CD8-positive, alpha-beta T cell (primary cell): ENCODE measurements at regions of chr1 and their contacts with region 1.

Region 1: GRCh38 chr1:167553136-167554027 is at the start of gene CREG1:
- DNase-seq: peak; percentile 70 to 93 (median 88)
- ATAC-seq: peak; percentile 97
- H3K4me3 ChIP-seq: peak within 1 kb of the TSS; percentile 62 to 70
- H3K4me3 Mint-ChIP-seq: peak within 1 kb of the TSS; percentile 88
- H3K27ac ChIP-seq: peak within 1 kb of the TSS in 1 of 2 experiments; percentile 57
- H3K27ac Mint-ChIP-seq: no peak within 1 kb of the TSS
- H3K4me1 ChIP-seq: peaks cover 18% of the 10 kb centered on the region
- H3K4me1 Mint-ChIP-seq: peaks cover 47% of the 10 kb centered on the region
- H3K27me3 ChIP-seq: no peaks in the 10 kb centered on the region
- H3K27me3 Mint-ChIP-seq: no peaks in the 10 kb centered on the region
- CTCF ChIP-seq: no peak
- total RNA-seq, gene CREG1: 9.3 to 9.8 TPM

Region 2: GRCh38 chr1:167185974-167186657 is 367.3 kb before region 1 on chr1:
- CTCF ChIA-PET with region 1: no interaction called
- POLR2A ChIA-PET with region 1: no interaction called
- intact Hi-C with region 1: no loop called
- DNase-seq: no peak
- ATAC-seq: no peak
- H3K4me3 ChIP-seq: no peak overlapping the region
- H3K4me3 Mint-ChIP-seq: no peak overlapping the region
- H3K27ac ChIP-seq: no peak overlapping the region
- H3K27ac Mint-ChIP-seq: no peak overlapping the region
- H3K4me1 ChIP-seq: no peaks in the 10 kb centered on the region
- H3K4me1 Mint-ChIP-seq: no peaks in the 10 kb centered on the region
- H3K27me3 ChIP-seq: peaks cover 0 to 3% of the 10 kb centered on the region in 2 experiments
- H3K27me3 Mint-ChIP-seq: peaks cover 17% of the 10 kb centered on the region
- CTCF ChIP-seq: no peak

Region 3: GRCh38 chr1:167270349-167271092 is 282.9 kb before region 1 on chr1:
- CTCF ChIA-PET with region 1: interaction called, 11 read pairs
- POLR2A ChIA-PET with region 1: interaction called, 3 read pairs
- intact Hi-C with region 1: loop called (anchors 5 kb)
- DNase-seq: no peak
- ATAC-seq: no peak
- H3K4me3 ChIP-seq: no peak overlapping the region
- H3K4me3 Mint-ChIP-seq: no peak overlapping the region
- H3K27ac ChIP-seq: no peak overlapping the region
- H3K27ac Mint-ChIP-seq: no peak overlapping the region
- H3K4me1 ChIP-seq: peaks cover 9% of the 10 kb centered on the region
- H3K4me1 Mint-ChIP-seq: peaks cover 43% of the 10 kb centered on the region
- H3K27me3 ChIP-seq: no peaks in the 10 kb centered on the region
- H3K27me3 Mint-ChIP-seq: no peaks in the 10 kb centered on the region
- CTCF ChIP-seq: no peak

Region 4: DNA sequence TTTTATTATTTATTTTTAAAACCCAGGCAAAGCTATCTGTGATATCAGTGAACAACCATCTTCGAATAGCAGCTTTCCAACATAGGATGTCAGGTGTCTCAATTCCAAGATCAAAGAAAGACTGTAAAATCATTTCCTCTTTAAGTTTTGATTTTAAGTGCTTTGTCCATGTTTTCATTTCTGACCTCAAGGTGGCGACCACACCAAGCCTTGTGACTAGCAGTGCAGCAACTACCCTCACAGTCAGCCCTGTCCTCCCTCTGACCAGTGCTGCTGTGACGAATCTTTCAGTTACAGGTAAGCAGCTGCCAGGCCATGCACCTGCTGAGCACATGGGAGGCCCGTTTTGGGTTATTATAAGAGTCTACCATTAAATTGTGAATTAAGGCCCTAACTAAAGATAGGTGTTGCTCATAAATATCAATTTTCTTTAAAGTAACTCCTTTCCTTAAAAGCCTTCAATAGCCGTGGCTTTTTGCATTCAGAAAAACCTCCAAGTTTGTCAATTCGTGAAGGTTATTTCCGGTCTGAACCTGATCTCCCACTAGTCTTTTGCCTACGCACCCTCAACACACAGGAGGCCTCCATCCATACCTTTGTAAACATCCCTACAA is 152.0 kb before region 1 on chr1:
- CTCF ChIA-PET with region 1: interaction called, 12 read pairs
- POLR2A ChIA-PET with region 1: no interaction called
- intact Hi-C with region 1: no loop called
- DNase-seq: peak; percentile 4 to 79 (median 51)
- ATAC-seq: peak; percentile 73
- H3K4me3 ChIP-seq: no peak overlapping the region
- H3K4me3 Mint-ChIP-seq: no peak overlapping the region
- H3K27ac ChIP-seq: no peak overlapping the region
- H3K27ac Mint-ChIP-seq: no peak overlapping the region
- H3K4me1 ChIP-seq: no peaks in the 10 kb centered on the region
- H3K4me1 Mint-ChIP-seq: peaks cover 5% of the 10 kb centered on the region
- H3K27me3 ChIP-seq: no peaks in the 10 kb centered on the region
- H3K27me3 Mint-ChIP-seq: no peaks in the 10 kb centered on the region
- CTCF ChIP-seq: peak; percentile 36

Region 5: DNA sequence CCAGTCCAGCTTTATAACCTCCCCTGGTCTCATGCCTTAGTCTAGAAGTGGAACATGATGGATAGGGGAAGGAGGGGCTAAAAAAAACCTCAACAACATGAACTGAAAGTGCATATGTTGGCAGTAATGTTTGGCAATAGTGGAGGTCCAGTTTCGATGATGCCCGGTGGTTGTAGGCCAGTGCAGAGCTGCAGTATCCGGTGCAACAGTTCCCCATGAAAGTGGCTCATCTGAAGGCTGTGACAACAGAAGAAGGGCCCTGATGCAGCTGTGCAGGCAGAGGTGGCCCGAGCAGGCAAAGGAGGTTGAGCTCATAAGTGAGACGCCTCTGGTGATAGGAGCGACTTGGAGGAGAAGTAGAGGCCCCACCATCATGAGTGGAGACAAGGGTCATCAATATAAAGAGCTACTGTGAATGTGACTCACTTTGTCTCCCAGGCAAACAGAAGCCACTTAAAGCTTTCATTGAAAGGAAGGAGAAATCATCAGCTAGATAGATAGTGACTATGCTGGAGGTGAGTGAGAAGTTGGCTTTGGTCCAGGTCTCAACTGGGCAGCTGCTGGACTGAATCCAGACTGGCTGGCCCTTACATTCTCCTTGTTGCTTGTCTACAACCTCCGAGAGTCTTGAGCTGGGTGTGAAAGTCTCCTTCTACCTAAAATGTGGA is 10.3 kb after region 1 on chr1:
- CTCF ChIA-PET with region 1: interaction called, 19 read pairs
- POLR2A ChIA-PET with region 1: no interaction called
- intact Hi-C with region 1: no loop called
- DNase-seq: no peak
- ATAC-seq: no peak
- H3K4me3 ChIP-seq: no peak overlapping the region
- H3K4me3 Mint-ChIP-seq: no peak overlapping the region
- H3K27ac ChIP-seq: no peak overlapping the region
- H3K27ac Mint-ChIP-seq: no peak overlapping the region
- H3K4me1 ChIP-seq: no peaks in the 10 kb centered on the region
- H3K4me1 Mint-ChIP-seq: no peaks in the 10 kb centered on the region
- H3K27me3 ChIP-seq: no peaks in the 10 kb centered on the region
- H3K27me3 Mint-ChIP-seq: no peaks in the 10 kb centered on the region
- CTCF ChIP-seq: no peak

Region 6: GRCh38 chr1:167635156-167635648 is 81.8 kb after region 1 on chr1:
- CTCF ChIA-PET with region 1: interaction called, 3 read pairs
- POLR2A ChIA-PET with region 1: interaction called, 4 read pairs
- intact Hi-C with region 1: loop called (anchors 5 kb)
- DNase-seq: peak in 1 of 9 experiments; percentile 46
- ATAC-seq: no peak
- H3K4me3 ChIP-seq: no peak overlapping the region
- H3K4me3 Mint-ChIP-seq: peak overlapping the region; percentile 8
- H3K27ac ChIP-seq: peak overlapping the region in 1 of 2 experiments; percentile 5
- H3K27ac Mint-ChIP-seq: peak overlapping the region; percentile 97
- H3K4me1 ChIP-seq: peaks cover 76% of the 10 kb centered on the region
- H3K4me1 Mint-ChIP-seq: peaks cover 88% of the 10 kb centered on the region
- H3K27me3 ChIP-seq: no peaks in the 10 kb centered on the region
- H3K27me3 Mint-ChIP-seq: no peaks in the 10 kb centered on the region
- CTCF ChIP-seq: no peak